ENCODE measurements at regions of chr9 and their contacts with region 1.

Region 1: DNA sequence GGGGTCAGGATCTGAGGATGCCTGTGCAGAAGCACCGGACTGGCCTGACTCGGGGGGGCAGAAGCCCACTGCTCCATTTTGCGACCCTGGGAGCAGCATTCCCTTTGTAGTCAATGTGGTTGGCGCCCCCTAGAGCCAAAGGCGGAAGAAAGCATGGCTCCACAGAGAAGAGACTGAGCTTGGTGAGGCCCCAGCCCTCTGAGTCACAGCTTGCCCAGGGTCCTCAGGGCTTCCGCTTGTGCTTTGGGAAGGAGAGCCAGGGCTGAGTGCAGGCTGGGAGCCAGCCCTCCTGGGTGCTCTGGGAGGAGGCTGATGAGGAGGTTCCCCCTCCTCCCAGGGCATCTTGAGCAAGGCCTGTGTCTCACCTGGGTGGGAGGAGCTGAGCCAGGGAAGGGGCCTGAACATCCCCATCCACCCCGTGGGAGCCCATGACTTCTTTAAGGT is 5.5 kb upstream of the AQP3 start:
- DNase-seq: peak; percentile 88
- ATAC-seq: peak; percentile 97
- H3K4me3 Mint-ChIP-seq: no peak overlapping the region
- H3K27ac Mint-ChIP-seq: no peak overlapping the region; the same call in 1 of the 2 replicates
- H3K4me1 Mint-ChIP-seq: peaks cover 16% of the 10 kb centered on the region
- H3K27me3 Mint-ChIP-seq: peaks cover 10% of the 10 kb centered on the region
- CTCF ChIP-seq: peak; percentile 62

Region 2: GRCh38 chr9:33290247-33291030 is 162.4 kb before region 1 on chr9 and contains the start of gene NFX1:
- CTCF ChIA-PET with region 1: interaction called, 16 read pairs
- POLR2A ChIA-PET with region 1: no interaction called
- DNase-seq: peak; percentile 96
- ATAC-seq: peak; percentile 90
- H3K4me3 Mint-ChIP-seq: peak within 1 kb of the TSS; percentile 99
- H3K27ac Mint-ChIP-seq: peak within 1 kb of the TSS; percentile 99
- H3K4me1 Mint-ChIP-seq: peaks cover 14% of the 10 kb centered on the region
- H3K27me3 Mint-ChIP-seq: no peaks in the 10 kb centered on the region
- CTCF ChIP-seq: no peak
- total RNA-seq, gene NFX1: 25.4 to 30.9 TPM (median 26.5 TPM) in 3 replicates

Region 3: DNA sequence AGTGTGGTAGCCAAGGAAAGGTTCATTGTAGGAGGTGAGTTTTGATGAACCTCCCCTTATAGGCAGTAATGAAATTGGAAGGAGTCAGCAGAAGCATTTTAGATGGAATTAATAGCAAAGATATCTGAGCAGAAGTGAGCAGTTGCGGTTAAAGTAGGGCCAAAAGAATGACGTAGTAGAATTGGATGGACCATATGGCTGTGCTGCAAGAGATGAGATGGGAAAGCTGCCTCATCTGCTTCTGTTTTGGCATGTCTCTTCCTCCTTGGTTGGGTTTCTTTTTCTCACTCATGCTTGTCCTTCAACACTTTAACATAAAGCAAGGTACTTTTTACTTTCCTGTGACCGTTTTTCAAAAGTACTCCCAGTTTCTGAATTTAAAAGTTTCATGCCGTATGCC is 106.3 kb before region 1 on chr9:
- CTCF ChIA-PET with region 1: no interaction called
- POLR2A ChIA-PET with region 1: no interaction called
- DNase-seq: no peak
- ATAC-seq: no peak
- H3K4me3 Mint-ChIP-seq: no peak overlapping the region
- H3K27ac Mint-ChIP-seq: 0 out of 2 replicates have a peak overlapping the region, but pooled peaks have one; percentile 14
- H3K4me1 Mint-ChIP-seq: peaks cover 6% of the 10 kb centered on the region; the same call in 1 of the 2 replicates
- H3K27me3 Mint-ChIP-seq: no peaks in the 10 kb centered on the region
- CTCF ChIP-seq: no peak

Region 4: GRCh38 chr9:33381231-33381791 is 71.5 kb before region 1 on chr9:
- CTCF ChIA-PET with region 1: interaction called, 110 read pairs
- POLR2A ChIA-PET with region 1: no interaction called
- DNase-seq: peak; percentile 87
- ATAC-seq: peak; percentile 95
- H3K4me3 Mint-ChIP-seq: no peak overlapping the region
- H3K27ac Mint-ChIP-seq: peak overlapping the region; percentile 70; the same call in 1 of the 2 replicates
- H3K4me1 Mint-ChIP-seq: peaks cover 19% of the 10 kb centered on the region
- H3K27me3 Mint-ChIP-seq: no peaks in the 10 kb centered on the region
- CTCF ChIP-seq: no peak

Region 5: GRCh38 chr9:33436440-33436839 is 16.4 kb before region 1 on chr9:
- CTCF ChIA-PET with region 1: interaction called, 69 read pairs
- POLR2A ChIA-PET with region 1: no interaction called
- DNase-seq: no peak
- ATAC-seq: peak; percentile 19
- H3K4me3 Mint-ChIP-seq: no peak overlapping the region
- H3K27ac Mint-ChIP-seq: no peak overlapping the region
- H3K4me1 Mint-ChIP-seq: peaks cover 17% of the 10 kb centered on the region
- H3K27me3 Mint-ChIP-seq: no peaks in the 10 kb centered on the region
- CTCF ChIP-seq: no peak

Region 6: GRCh38 chr9:33473643-33474352 is 20.9 kb after region 1 on chr9 and contains the start of gene NOL6:
- CTCF ChIA-PET with region 1: interaction called, 39 read pairs
- POLR2A ChIA-PET with region 1: no interaction called
- DNase-seq: peak; percentile 98
- ATAC-seq: peak; percentile 100
- H3K4me3 Mint-ChIP-seq: peak within 1 kb of the TSS; percentile 96
- H3K27ac Mint-ChIP-seq: peak within 1 kb of the TSS; percentile 97
- H3K4me1 Mint-ChIP-seq: peaks cover 10% of the 10 kb centered on the region; the same call in 1 of the 2 replicates
- H3K27me3 Mint-ChIP-seq: no peaks in the 10 kb centered on the region
- CTCF ChIP-seq: no peak
- total RNA-seq, gene NOL6: 38.6 to 48.5 TPM (median 42.2 TPM) in 3 replicates